ENCODE measurements at regions of chr19 and their contacts with region 1.

Region 1: GRCh38 chr19:57227502-57227901 is 3.3 kb upstream of the AURKC start:
- DNase-seq: no peak

Region 2: DNA sequence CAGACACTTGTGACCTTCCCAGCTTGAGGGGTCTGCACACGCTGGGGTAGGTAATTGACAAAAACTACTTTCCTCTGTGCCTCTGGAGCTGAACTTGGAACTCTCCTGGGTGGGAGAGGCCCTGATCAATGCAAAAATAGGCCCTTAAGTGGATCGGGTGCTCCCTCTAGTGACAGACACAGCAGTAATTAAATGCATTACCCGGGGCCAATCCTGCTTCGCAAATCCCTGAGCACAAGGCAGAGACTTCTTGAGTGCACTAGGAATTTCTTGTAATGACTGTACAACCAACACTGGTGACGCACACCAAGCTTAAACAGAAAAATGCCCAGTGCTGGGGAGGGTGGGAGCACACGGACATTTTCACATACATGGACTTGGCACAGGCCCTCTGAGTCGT is 1809.3 kb before region 1 on chr19:
- intact Hi-C with region 1: loop called in 1 of 2 experiments (anchors 5 kb)
- DNase-seq: no peak

Region 3: GRCh38 chr19:57037556-57037955 is 189.9 kb before region 1 on chr19:
- intact Hi-C with region 1: no loop called
- DNase-seq: no peak

Region 4: GRCh38 chr19:57171551-57172081 is 55.9 kb before region 1 on chr19:
- intact Hi-C with region 1: no loop called
- DNase-seq: peak; percentile 84

Region 5: DNA sequence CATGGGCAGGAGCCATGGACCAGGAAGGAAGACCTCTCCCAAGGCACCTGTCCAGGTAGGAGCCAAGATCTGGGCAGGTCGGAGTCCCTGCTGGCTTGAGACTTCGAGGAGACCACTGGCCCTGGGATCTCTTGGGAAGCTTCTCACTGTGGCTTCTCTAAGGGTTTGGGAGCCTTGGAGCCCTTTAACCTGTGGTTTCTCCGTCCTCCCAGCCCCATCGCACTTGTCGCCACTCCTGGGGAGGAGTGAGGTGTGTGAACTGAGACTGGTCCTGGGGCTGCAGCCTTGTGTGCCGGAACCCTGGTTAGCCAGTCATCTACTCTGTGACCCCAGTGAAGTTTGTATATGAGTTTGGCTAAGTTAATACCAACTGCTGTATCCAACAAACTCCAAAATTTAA is 21.1 kb after region 1 on chr19:
- intact Hi-C with region 1: loop called in 1 of 2 experiments (anchors 2 kb)
- DNase-seq: no peak

Region 6: GRCh38 chr19:57269515-57270250 is 42.2 kb after region 1 on chr19:
- intact Hi-C with region 1: no loop called
- DNase-seq: no peak